PC-9 (cell line): ENCODE measurements at regions of chr6 and their contacts with region 1.

Region 1: DNA sequence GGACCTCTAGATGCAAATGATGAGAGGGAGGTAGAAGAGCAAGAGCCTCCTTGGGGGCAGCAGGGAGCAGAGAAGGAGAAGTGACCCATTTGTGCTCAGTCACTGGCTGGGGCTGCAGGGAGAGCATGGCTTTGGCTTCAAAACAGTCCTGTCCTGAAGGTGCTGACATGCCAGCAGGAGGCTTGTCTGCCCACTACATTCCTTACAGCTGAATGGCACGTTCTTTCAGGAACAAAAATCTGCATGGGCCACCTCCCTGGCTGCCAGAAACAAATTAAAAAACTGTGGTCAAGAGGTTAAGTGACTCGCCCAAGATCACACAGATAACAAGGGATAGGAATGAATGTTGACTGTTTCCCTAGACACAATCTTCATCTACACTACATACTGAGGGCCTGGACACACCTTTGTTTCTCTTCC is 188.8 kb downstream of the HIVEP2 start:
- DNase-seq: peak; percentile 86 to 97
- H3K4me3 ChIP-seq: no peak overlapping the region
- H3K27ac ChIP-seq: peak overlapping the region; percentile 54
- H3K4me1 ChIP-seq: peaks cover 22% of the 10 kb centered on the region
- H3K27me3 ChIP-seq: no peaks in the 10 kb centered on the region
- CTCF ChIP-seq: 0 out of 2 replicates have a peak, but pooled peaks have one; percentile 22

Region 2: GRCh38 chr6:142195862-142196541 is 560.2 kb before region 1 on chr6:
- CTCF ChIA-PET with region 1: no interaction called
- POLR2A ChIA-PET with region 1: no interaction called
- intact Hi-C with region 1: no loop called
- DNase-seq: no peak
- H3K4me3 ChIP-seq: no peak overlapping the region
- H3K27ac ChIP-seq: no peak overlapping the region
- H3K4me1 ChIP-seq: 0 out of 2 replicates have a peak, but pooled peaks cover 4% of the 10 kb centered on the region
- H3K27me3 ChIP-seq: no peaks in the 10 kb centered on the region
- CTCF ChIP-seq: no peak

Region 3: DNA sequence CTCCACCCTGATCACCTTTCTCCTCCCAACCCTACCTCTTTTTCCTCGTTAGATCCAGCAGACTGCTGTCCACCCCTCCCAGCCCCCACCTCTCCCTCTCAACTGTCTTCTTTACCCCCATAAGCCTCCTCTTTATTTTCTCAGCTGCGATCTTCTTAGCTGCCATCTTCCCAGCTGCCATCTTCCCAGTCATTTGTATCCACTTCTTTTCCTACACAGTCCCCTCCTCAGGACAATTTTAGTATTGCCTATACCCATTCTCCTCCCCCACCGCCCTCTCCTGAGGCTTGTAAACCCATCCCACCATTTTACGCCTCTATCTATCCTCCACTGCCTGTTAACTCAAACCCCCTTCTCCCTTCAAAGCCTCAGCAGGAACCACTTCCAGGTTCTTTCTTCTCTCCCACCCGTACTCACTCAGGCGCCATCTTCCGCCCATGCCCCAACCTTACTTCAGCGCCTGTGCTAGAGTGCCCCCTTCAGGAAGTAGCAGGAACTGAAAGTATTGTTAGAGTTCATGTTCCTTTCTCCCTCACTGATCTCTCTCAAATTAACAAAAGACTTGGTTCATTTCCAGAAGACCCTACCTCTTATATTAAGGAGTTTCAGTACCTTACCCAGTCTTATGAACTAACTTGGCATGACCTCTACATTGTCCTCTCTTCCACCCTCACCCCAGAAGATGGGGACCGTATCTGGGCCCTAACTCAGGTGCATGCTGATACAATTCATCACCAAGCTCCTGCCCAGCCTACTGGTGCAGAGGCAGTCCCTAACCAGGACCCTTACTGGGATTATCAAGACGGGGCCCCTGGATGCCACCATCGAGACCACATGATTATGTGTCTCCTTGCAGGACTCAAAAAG is 218.4 kb before region 1 on chr6:
- CTCF ChIA-PET with region 1: no interaction called
- POLR2A ChIA-PET with region 1: no interaction called
- intact Hi-C with region 1: no loop called
- DNase-seq: peak in 1 of 2 experiments; percentile 29
- H3K4me3 ChIP-seq: peak overlapping the region; percentile 42; the same call in 1 of the 2 replicates
- H3K27ac ChIP-seq: no peak overlapping the region
- H3K4me1 ChIP-seq: no peaks in the 10 kb centered on the region
- H3K27me3 ChIP-seq: no peaks in the 10 kb centered on the region
- CTCF ChIP-seq: peak; percentile 80

Region 4: DNA sequence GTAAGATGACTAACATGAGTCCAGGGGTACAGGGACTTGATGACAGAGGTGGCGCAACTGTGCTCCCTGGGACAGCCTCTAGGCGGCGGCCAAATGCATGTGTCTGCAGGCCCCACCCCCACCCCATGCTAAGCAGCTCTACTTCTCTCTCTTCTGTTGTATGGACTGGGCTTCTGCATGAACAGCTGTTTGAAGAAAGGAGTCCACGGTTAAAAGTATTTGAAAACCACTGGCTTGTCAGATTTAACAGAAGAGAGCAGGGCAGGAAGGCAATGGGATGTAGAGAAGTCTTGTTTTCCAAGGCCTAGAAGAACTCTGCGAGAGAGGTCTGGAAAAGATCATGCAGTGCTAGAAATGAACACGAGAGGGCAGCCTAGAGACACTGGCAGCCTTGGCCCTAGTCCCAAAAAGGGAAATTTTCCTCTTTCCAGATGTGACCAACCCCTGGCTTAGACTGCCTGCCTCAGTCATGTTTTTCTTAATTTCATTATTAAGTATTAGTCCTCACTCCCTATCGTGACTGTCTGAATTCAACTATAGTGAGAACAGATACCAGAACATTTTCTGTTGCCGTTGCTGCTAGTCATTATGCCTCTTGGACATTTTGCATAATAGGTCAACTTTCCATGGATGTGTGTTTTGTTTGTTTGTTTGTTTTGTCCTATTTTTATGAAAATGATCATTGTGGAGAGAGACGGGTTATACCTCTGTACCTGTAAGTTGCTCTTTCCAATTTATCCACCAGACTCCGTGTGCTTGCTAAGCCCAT is 189.4 kb before region 1 on chr6:
- CTCF ChIA-PET with region 1: no interaction called
- POLR2A ChIA-PET with region 1: no interaction called
- intact Hi-C with region 1: loop called (anchors 1 kb)
- DNase-seq: peak; percentile 44 to 56
- H3K4me3 ChIP-seq: no peak overlapping the region
- H3K27ac ChIP-seq: no peak overlapping the region
- H3K4me1 ChIP-seq: peaks cover 20% of the 10 kb centered on the region
- H3K27me3 ChIP-seq: no peaks in the 10 kb centered on the region
- CTCF ChIP-seq: peak; percentile 90

Region 5: GRCh38 chr6:142735204-142735603 is 21.0 kb before region 1 on chr6:
- CTCF ChIA-PET with region 1: no interaction called
- POLR2A ChIA-PET with region 1: no interaction called
- intact Hi-C with region 1: loop called (anchors 1 kb)
- DNase-seq: peak in 1 of 2 experiments; percentile 95
- H3K4me3 ChIP-seq: no peak overlapping the region
- H3K27ac ChIP-seq: peak overlapping the region; percentile 86
- H3K4me1 ChIP-seq: peaks cover 46% of the 10 kb centered on the region
- H3K27me3 ChIP-seq: no peaks in the 10 kb centered on the region
- CTCF ChIP-seq: no peak

Region 6: DNA sequence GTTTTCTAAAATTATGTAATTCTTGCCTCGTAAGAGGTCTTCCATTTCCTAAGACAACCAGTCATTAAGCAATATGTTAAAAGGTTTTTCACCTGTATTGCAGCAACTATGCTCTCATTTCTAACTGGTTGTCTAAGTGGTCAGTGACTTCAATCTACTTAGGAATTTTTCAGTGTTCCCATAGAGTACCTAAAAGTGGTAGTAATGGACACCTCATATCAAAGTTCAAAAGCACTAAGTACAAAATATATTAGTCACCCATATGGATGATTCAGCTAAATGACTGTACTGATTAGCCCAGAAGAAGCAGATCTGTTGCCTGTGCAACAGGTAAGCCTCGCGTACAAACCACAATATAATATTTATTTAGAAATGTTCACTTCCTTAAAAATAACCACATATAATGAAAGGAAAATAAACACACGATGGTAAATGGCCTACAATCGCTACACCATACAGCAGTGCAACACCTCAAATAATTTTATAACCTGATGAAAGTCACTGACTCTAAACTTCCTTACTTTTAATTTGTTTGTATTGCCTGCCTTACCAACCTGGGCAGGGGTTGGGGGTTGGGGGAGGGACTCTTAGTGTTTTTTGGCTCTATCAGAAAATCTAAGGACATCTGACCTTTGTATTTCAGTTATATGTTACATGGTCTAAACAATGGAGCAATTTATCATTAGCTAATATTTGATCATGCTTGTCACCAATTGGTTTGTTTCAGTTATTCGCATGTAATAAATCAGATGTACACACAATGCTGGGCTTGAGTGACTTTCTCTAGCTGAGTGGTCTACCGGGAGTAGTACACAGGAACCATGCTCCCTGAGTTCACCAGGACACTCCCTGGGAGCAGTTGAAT is 82.8 kb after region 1 on chr6:
- CTCF ChIA-PET with region 1: no interaction called
- POLR2A ChIA-PET with region 1: no interaction called
- intact Hi-C with region 1: loop called (anchors 2 kb)
- DNase-seq: peak in 1 of 2 experiments; percentile 99
- H3K4me3 ChIP-seq: peak overlapping the region; percentile 36; the same call in 1 of the 2 replicates
- H3K27ac ChIP-seq: peak overlapping the region; percentile 94
- H3K4me1 ChIP-seq: peaks cover 70% of the 10 kb centered on the region
- H3K27me3 ChIP-seq: no peaks in the 10 kb centered on the region
- CTCF ChIP-seq: no peak

Region 7: GRCh38 chr6:142845624-142846458 is 89.6 kb after region 1 on chr6:
- CTCF ChIA-PET with region 1: no interaction called
- POLR2A ChIA-PET with region 1: interaction called, 4 read pairs
- intact Hi-C with region 1: loop called (anchors 1 kb)
- DNase-seq: peak; percentile 86
- H3K4me3 ChIP-seq: peak overlapping the region; percentile 51; the same call in 1 of the 2 replicates
- H3K27ac ChIP-seq: peak overlapping the region; percentile 89
- H3K4me1 ChIP-seq: peaks cover 84% of the 10 kb centered on the region
- H3K27me3 ChIP-seq: no peaks in the 10 kb centered on the region
- CTCF ChIP-seq: no peak

Region 8: DNA sequence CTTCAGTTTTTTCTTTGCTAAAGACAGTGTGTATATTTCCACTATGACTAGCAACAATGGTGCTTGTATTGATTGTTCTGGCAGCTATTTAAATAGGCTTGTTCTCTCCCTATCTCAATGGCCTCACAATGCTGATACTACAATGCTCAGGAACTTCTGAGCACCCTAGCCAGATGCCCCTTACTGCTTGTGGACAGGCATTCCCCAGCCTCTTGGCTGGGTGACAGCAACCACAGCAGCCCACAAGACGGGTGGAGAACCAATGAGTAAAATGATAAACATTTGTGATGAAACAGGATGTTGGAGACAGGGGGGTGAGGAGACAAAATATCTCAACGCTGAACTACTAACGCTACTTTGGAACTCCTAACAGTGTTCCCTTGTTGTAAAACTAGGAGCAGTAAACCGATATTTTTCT is 146.4 kb after region 1 on chr6:
- CTCF ChIA-PET with region 1: no interaction called
- POLR2A ChIA-PET with region 1: no interaction called
- intact Hi-C with region 1: loop called (anchors 1 kb)
- DNase-seq: peak; percentile 81 to 91
- H3K4me3 ChIP-seq: peak overlapping the region; percentile 40; the same call in 1 of the 2 replicates
- H3K27ac ChIP-seq: peak overlapping the region; percentile 82
- H3K4me1 ChIP-seq: peaks cover 38% of the 10 kb centered on the region
- H3K27me3 ChIP-seq: no peaks in the 10 kb centered on the region
- CTCF ChIP-seq: no peak